ENCODE measurements at regions of chr10 and their contacts with region 1.

Region 1: GRCh38 chr10:103918053-103918846 is at the start of gene STN1:
- DNase-seq: peak; percentile 100
- H3K4me3 ChIP-seq: peak within 1 kb of the TSS; percentile 53 to 92 (median 70)
- H3K27ac ChIP-seq: peak within 1 kb of the TSS; percentile 94 to 98 (median 95)
- H3K4me1 ChIP-seq: peaks cover 24 to 52% (median 43%) of the 10 kb centered on the region in 6 donors
- H3K27me3 ChIP-seq: no peaks in the 10 kb centered on the region
- CTCF ChIP-seq: peak in 4 of 11 experiments; percentile 10 to 51 (median 28)
- POLR2A ChIP-seq: peak; percentile 84 to 97 (median 84)
- total RNA-seq, gene STN1: 18.6 to 27.7 (median 24.1) TPM

Region 2: GRCh38 chr10:103966671-103967447 is 48.6 kb after region 1 on chr10 and contains the start of gene SLK:
- intact Hi-C with region 1: loop called (anchors 10 kb)
- DNase-seq: peak; percentile 96
- H3K4me3 ChIP-seq: peak within 1 kb of the TSS; percentile 71 to 94 (median 78)
- H3K27ac ChIP-seq: peak within 1 kb of the TSS; percentile 90 to 99 (median 98)
- H3K4me1 ChIP-seq: peaks cover 23 to 55% (median 44%) of the 10 kb centered on the region in 6 donors
- H3K27me3 ChIP-seq: no peaks in the 10 kb centered on the region
- CTCF ChIP-seq: no peak
- POLR2A ChIP-seq: peak in 2 of 3 donors; percentile 85 to 86
- total RNA-seq, gene SLK: 28.9 to 47.4 (median 39.0) TPM

Region 3: GRCh38 chr10:104002911-104003310 is 84.7 kb after region 1 on chr10:
- intact Hi-C with region 1: no loop called
- DNase-seq: no peak
- H3K4me3 ChIP-seq: no peak overlapping the region
- H3K27ac ChIP-seq: peak overlapping the region in 2 of 8 donors; percentile 37 to 52
- H3K4me1 ChIP-seq: peaks cover 0 to 4% (median 0%) of the 10 kb centered on the region in 6 donors
- H3K27me3 ChIP-seq: no peaks in the 10 kb centered on the region
- CTCF ChIP-seq: no peak
- POLR2A ChIP-seq: no peak

Region 4: DNA sequence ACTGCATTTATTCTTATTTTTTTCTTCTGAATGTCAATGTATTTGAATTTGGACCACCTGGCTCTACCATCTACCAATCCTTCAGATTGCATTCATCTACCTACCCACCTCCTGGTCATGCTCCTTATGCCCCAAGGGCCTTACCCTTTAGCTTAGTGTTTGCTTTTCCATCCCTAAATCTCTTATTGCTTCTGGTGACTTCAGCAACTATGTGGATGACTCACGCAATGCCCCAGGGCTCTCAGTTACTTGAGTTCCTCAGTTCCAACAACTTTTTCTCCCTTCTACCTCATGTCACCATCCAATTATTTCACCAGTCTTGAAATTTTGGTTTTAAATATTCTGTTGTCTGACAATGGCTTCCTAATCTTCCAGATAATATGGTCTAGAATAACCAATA is 554.2 kb after region 1 on chr10:
- intact Hi-C with region 1: no loop called
- DNase-seq: no peak
- H3K4me3 ChIP-seq: no peak overlapping the region
- H3K27ac ChIP-seq: no peak overlapping the region
- H3K4me1 ChIP-seq: no peaks in the 10 kb centered on the region
- H3K27me3 ChIP-seq: no peaks in the 10 kb centered on the region
- CTCF ChIP-seq: no peak
- POLR2A ChIP-seq: no peak